ENCODE measurements at regions of chr18 and their contacts with region 1.

Region 1: GRCh38 chr18:48017635-48018034 is 87.2 kb upstream of the SMAD2 start:
- DNase-seq: no peak
- ATAC-seq: peak in 2 of 4 donors; percentile 42 to 56
- H3K4me3 ChIP-seq: no peak overlapping the region
- H3K27ac ChIP-seq: no peak overlapping the region
- H3K4me1 ChIP-seq: peaks cover 0 to 4% (median 0%) of the 10 kb centered on the region in 12 donors
- H3K27me3 ChIP-seq: peaks cover 0 to 9% (median 0%) of the 10 kb centered on the region in 9 donors
- CTCF ChIP-seq: no peak
- POLR2A ChIP-seq: no peak

Region 2: DNA sequence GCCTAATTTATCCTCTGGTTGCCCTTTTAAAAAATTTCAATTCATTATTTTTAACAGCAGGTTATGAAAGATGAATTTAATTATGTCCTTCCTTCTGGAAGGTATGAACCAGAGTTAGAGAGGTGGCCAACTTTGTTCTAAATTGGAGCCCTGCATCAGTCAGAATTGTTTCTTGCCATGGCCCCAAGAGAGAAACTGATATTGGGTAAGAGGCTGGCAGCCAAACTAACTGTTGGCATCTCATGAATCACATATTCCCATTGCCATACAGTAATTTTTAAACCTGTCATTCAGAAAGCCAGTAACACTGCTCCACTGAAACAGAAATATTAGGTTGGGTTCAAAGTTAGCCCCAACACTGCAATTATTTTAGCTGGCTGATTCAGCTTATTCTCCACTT is 154.6 kb before region 1 on chr18:
- intact Hi-C with region 1: loop called in 1 of 10 experiments (anchors 10 kb)
- DNase-seq: peak in 4 of 5 donors; percentile 26 to 40 (median 33)
- ATAC-seq: peak; percentile 92 to 96 (median 95)
- H3K4me3 ChIP-seq: no peak overlapping the region
- H3K27ac ChIP-seq: peak overlapping the region in 8 of 12 donors; percentile 15 to 63 (median 36)
- H3K4me1 ChIP-seq: peaks cover 0 to 14% (median 2%) of the 10 kb centered on the region in 12 donors
- H3K27me3 ChIP-seq: no peaks in the 10 kb centered on the region
- CTCF ChIP-seq: no peak
- POLR2A ChIP-seq: no peak

Measured in heart left ventricle (tissue), 16 donors.